CD4-positive, alpha-beta T cell (primary cell): ENCODE measurements at regions of chr1 and their contacts with region 1.

Region 1: DNA sequence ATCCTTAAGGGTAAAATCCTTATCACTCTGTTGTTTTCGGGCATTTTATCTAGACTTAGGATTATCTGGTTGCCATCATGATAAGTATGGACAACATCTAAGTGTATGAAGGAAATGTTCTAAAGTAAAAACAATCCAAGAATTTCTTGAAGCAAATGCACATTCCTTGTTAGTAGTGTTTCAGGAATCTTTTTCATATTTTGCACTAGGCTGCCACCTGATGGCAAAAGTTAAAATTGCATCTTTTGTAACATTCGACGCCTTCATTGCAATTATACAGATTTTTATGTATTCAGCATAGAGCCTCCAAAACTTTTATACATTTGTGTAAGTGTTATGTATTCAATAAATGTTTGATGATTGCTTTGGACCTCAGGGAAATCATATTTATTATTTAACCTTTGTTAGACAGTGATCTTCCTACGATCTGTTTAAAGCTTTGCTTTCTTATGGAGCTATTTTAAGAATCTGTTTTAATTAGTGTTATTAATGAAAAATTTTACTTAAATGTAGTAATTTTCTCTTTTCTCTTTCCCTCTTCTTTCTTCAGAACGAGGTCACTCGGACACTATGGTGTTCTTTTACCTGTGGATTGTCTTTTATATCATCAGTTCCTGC is 49.4 kb upstream of the KIAA1614 start:
- DNase-seq: peak in 6 of 14 experiments; percentile 2 to 67 (median 49)
- ATAC-seq: no peak
- H3K4me3 ChIP-seq: no peak overlapping the region
- H3K4me3 Mint-ChIP-seq: no peak overlapping the region
- H3K27ac ChIP-seq: no peak overlapping the region
- H3K27ac Mint-ChIP-seq: no peak overlapping the region
- H3K4me1 ChIP-seq: no peaks in the 10 kb centered on the region
- H3K4me1 Mint-ChIP-seq: no peaks in the 10 kb centered on the region
- H3K27me3 ChIP-seq: no peaks in the 10 kb centered on the region
- H3K27me3 Mint-ChIP-seq: no peaks in the 10 kb centered on the region
- CTCF ChIP-seq: peak; percentile 88

Region 2: GRCh38 chr1:180515864-180516388 is 347.3 kb before region 1 on chr1:
- CTCF ChIA-PET with region 1: interaction called, 41 read pairs
- POLR2A ChIA-PET with region 1: interaction called, 5 read pairs
- intact Hi-C with region 1: loop called (anchors 1 to 5 kb)
- DNase-seq: peak; percentile 20 to 81 (median 36)
- ATAC-seq: peak; percentile 96
- H3K4me3 ChIP-seq: no peak overlapping the region
- H3K4me3 Mint-ChIP-seq: no peak overlapping the region
- H3K27ac ChIP-seq: no peak overlapping the region
- H3K27ac Mint-ChIP-seq: no peak overlapping the region
- H3K4me1 ChIP-seq: peaks cover 3% of the 10 kb centered on the region
- H3K4me1 Mint-ChIP-seq: no peaks in the 10 kb centered on the region
- H3K27me3 ChIP-seq: peaks cover 7 to 8% of the 10 kb centered on the region in 2 experiments
- H3K27me3 Mint-ChIP-seq: no peaks in the 10 kb centered on the region
- CTCF ChIP-seq: peak; percentile 88

Region 3: GRCh38 chr1:180533266-180533987 is 329.8 kb before region 1 on chr1:
- CTCF ChIA-PET with region 1: interaction called, 3 read pairs
- POLR2A ChIA-PET with region 1: no interaction called
- intact Hi-C with region 1: loop called (anchors 1 to 5 kb)
- DNase-seq: peak; percentile 33 to 74 (median 44)
- ATAC-seq: peak; percentile 62
- H3K4me3 ChIP-seq: no peak overlapping the region
- H3K4me3 Mint-ChIP-seq: no peak overlapping the region
- H3K27ac ChIP-seq: no peak overlapping the region
- H3K27ac Mint-ChIP-seq: no peak overlapping the region
- H3K4me1 ChIP-seq: no peaks in the 10 kb centered on the region
- H3K4me1 Mint-ChIP-seq: no peaks in the 10 kb centered on the region
- H3K27me3 ChIP-seq: no peaks in the 10 kb centered on the region
- H3K27me3 Mint-ChIP-seq: no peaks in the 10 kb centered on the region
- CTCF ChIP-seq: peak; percentile 62

Region 4: DNA sequence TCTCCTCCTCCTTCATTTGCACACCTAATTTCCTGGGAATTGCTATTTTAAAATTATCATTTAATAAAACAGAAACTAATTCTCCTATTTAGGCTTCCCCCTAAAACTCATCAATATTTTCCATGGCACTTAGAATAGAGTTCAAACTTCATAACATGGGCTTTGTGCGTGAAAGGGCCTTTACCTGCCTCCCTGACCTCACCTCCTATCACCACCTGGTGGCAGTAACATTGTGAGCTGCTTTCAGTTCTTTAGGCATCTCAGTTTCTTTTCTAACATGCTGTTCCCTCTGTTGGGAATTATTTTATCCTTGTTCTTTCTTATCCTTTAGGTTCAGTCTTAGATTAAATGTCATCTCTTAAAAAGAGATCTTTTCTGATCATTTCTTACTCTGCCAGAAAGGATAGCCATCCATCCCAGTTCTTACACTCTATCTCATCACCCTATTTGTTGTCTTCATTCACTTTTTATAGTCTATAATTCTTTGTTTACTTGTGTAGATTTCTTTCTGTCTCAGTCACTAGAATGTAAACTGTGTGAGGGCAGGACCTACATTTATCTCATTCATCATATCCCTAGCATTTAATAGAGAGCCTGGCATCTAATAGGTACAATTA is 84.4 kb before region 1 on chr1:
- CTCF ChIA-PET with region 1: no interaction called
- POLR2A ChIA-PET with region 1: no interaction called
- intact Hi-C with region 1: no loop called
- DNase-seq: peak in 3 of 14 experiments; percentile 3 to 13 (median 11)
- ATAC-seq: no peak
- H3K4me3 ChIP-seq: no peak overlapping the region
- H3K4me3 Mint-ChIP-seq: no peak overlapping the region
- H3K27ac ChIP-seq: no peak overlapping the region
- H3K27ac Mint-ChIP-seq: no peak overlapping the region
- H3K4me1 ChIP-seq: no peaks in the 10 kb centered on the region
- H3K4me1 Mint-ChIP-seq: peaks cover 12% of the 10 kb centered on the region
- H3K27me3 ChIP-seq: no peaks in the 10 kb centered on the region
- H3K27me3 Mint-ChIP-seq: no peaks in the 10 kb centered on the region
- CTCF ChIP-seq: peak; percentile 10